ENCODE measurements at regions of chr6 and their contacts with region 1.

Region 1: DNA sequence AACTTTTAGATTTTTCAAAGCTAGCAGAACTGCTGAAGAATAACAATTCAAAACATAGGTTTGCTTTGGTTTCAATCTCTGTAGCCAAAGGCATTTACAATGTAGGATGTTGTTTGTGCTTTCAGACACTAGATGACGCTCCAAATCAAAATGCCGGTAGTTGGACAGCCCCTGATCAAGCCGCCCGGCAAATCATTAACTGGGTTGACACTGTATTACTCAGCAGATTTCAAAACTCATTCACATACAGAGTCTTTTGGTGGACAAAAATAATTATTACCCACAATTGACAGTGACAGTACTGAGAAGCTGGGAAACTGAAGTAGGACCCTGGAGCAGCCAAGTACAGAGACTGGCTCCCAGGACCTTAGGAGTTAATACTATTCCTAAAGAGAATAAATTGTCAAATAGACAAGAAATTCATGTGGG is 21.3 kb upstream of the HFE start:
- DNase-seq: peak in 1 of 2 donors; percentile 64
- H3K4me3 ChIP-seq: no peak overlapping the region
- H3K27ac ChIP-seq: no peak overlapping the region
- H3K4me1 ChIP-seq: peaks cover 0 to 9% (median 0%) of the 10 kb centered on the region in 4 donors
- H3K27me3 ChIP-seq: no peaks in the 10 kb centered on the region
- CTCF ChIP-seq: peak; percentile 79 to 80

Region 2: DNA sequence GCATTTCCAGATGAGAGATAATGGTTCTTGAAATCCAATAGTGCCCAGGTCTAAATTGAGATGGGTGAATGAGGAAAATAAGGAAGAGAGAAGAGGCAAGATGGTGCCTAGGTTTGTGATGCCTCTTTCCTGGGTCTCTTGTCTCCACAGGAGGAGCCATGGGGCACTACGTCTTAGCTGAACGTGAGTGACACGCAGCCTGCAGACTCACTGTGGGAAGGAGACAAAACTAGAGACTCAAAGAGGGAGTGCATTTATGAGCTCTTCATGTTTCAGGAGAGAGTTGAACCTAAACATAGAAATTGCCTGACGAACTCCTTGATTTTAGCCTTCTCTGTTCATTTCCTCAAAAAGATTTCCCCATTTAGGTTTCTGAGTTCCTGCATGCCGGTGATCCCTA is 28.1 kb after region 1 on chr6:
- intact Hi-C with region 1: loop called (anchors 2 kb)
- DNase-seq: no peak
- H3K4me3 ChIP-seq: no peak overlapping the region
- H3K27ac ChIP-seq: no peak overlapping the region
- H3K4me1 ChIP-seq: peaks cover 0 to 7% (median 3%) of the 10 kb centered on the region in 4 donors
- H3K27me3 ChIP-seq: no peaks in the 10 kb centered on the region
- CTCF ChIP-seq: no peak